ENCODE measurements at regions of chr1 and their contacts with region 1.

Region 1: GRCh38 chr1:112390775-112391602 is 5.0 kb upstream of the CTTNBP2NL start:
- DNase-seq: peak; percentile 85
- H3K4me3 ChIP-seq: peak overlapping the region; percentile 91
- H3K27ac ChIP-seq: peak overlapping the region; percentile 93
- H3K4me1 ChIP-seq: peaks cover 56% of the 10 kb centered on the region
- H3K27me3 ChIP-seq: no peaks in the 10 kb centered on the region
- CTCF ChIP-seq: peak; percentile 96

Region 2: DNA sequence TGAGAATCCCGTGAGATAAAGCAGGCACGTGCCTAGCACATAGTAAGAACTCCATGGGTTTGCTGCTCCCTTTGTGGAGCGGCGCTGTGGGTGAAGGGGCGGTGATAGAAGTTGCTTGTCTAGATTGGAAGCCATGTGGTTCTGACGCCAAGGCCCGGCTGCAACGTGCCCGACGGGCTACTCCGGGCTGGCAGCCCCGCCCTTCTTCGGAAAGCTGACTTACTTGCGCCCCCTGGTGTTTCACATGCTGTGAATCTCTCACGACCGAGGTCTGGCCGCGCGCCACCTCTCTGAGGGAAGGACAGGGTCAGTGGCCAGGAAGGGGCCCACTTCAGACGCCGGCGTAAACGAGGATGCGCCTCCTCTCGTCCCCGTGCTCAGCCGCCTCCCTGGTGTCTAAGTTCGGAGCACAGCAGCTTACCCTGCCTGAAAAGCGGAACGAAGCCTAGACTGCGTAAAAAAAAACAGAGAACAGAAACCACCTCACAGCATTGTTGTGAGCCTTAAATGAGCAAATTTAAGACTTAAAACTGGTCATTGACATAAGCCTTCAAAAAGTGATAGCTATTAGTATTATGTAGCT is 75.2 kb after region 1 on chr1:
- intact Hi-C with region 1: loop called (anchors 5 kb)
- DNase-seq: peak; percentile 95
- H3K4me3 ChIP-seq: peak overlapping the region; percentile 61
- H3K27ac ChIP-seq: peak overlapping the region; percentile 81
- H3K4me1 ChIP-seq: peaks cover 32% of the 10 kb centered on the region
- H3K27me3 ChIP-seq: no peaks in the 10 kb centered on the region
- CTCF ChIP-seq: peak; percentile 91

Region 3: GRCh38 chr1:112477550-112477949 is 86.6 kb after region 1 on chr1:
- intact Hi-C with region 1: no loop called
- DNase-seq: no peak
- H3K4me3 ChIP-seq: no peak overlapping the region
- H3K27ac ChIP-seq: no peak overlapping the region
- H3K4me1 ChIP-seq: no peaks in the 10 kb centered on the region
- H3K27me3 ChIP-seq: no peaks in the 10 kb centered on the region
- CTCF ChIP-seq: no peak

Region 4: GRCh38 chr1:112674439-112674985 is 283.5 kb after region 1 on chr1 and contains the start of gene MOV10:
- intact Hi-C with region 1: loop called (anchors 10 kb)
- DNase-seq: peak; percentile 81
- H3K4me3 ChIP-seq: peak within 1 kb of the TSS; percentile 93
- H3K27ac ChIP-seq: peak within 1 kb of the TSS; percentile 91
- H3K4me1 ChIP-seq: peaks cover 43% of the 10 kb centered on the region
- H3K27me3 ChIP-seq: no peaks in the 10 kb centered on the region
- CTCF ChIP-seq: no peak
- total RNA-seq, gene MOV10: 12.7 TPM

Measured in left ventricle myocardium inferior (tissue), 1 donor.